ENCODE measurements at regions of chr6 and their contacts with region 1.

Region 1: DNA sequence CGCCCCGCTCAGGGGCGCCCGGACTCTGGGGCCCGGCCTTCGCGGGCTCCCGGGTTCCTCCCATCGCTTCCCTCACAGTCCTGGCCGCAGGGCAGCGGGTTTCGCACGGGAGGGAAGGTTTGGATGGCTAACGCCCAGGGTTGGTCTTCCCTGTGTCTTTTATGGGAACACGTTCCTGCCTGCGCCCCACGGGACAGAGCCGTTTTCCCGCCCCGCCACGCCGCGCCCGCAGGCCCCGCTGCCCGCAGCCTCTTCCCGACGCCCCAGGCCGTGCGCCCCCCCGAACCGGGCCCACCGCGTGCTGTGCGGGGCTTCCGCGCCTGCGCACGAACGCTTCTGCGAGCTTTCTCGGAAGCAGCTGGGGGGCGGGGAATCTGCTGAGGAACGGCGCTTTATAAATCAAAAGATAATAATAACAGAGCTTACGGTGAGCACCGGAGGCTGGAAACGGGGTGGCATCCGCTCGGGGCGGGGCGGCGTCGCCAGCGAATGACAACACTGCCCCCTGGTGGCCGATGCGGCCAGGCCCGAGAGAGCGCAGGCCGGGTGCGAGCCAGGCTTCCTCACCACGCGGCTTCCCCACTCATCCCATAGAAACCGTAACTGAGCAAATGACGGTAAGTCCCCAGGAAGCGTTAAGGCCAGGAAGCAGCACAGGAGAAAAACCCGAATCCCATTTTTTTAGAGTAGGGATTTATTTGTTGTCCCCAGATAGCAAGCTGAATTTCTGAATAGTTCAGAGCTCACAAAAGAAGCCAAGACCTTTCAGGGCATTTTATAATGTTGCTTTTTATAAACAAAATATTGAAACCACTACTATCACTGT is 116.4 kb downstream of the MYLK4 start:
- DNase-seq: peak; percentile 59
- H3K4me3 ChIP-seq: peak overlapping the region; percentile 37
- H3K27ac ChIP-seq: no peak overlapping the region
- H3K27me3 ChIP-seq: no peaks in the 10 kb centered on the region
- CTCF ChIP-seq: peak; percentile 98

Region 2: GRCh38 chr6:1596088-1596852 is 1038.1 kb before region 1 on chr6:
- CTCF ChIA-PET with region 1: interaction called, 72 read pairs
- POLR2A ChIA-PET with region 1: no interaction called
- DNase-seq: no peak
- H3K4me3 ChIP-seq: peak overlapping the region; percentile 58
- H3K27ac ChIP-seq: no peak overlapping the region
- H3K27me3 ChIP-seq: peaks cover 40% of the 10 kb centered on the region
- CTCF ChIP-seq: peak; percentile 93

Region 3: GRCh38 chr6:2363211-2363610 is 271.1 kb before region 1 on chr6:
- CTCF ChIA-PET with region 1: interaction called, 10 read pairs
- POLR2A ChIA-PET with region 1: no interaction called
- DNase-seq: no peak
- H3K4me3 ChIP-seq: no peak overlapping the region
- H3K27ac ChIP-seq: no peak overlapping the region
- H3K27me3 ChIP-seq: no peaks in the 10 kb centered on the region
- CTCF ChIP-seq: no peak

Region 4: DNA sequence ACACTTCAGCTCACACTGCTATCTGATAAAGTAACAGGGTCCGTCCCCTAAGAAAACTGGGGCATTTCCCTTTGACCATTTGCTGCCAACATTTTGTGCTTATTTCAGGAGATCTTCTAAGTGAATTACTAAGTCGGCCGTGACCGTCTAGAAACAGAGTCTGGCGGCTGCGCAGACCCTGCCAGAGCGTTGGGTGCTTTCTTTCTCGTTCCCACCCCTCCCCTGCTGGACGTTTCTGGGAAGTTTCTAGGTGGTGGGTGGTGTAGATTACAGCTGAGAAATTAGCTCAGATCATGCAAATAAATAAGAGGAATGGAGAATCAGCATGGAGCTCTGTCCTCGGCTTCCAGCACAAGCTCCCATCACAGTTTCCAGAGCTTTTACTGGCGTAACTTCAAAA is 11.7 kb before region 1 on chr6:
- CTCF ChIA-PET with region 1: interaction called, 14 read pairs
- POLR2A ChIA-PET with region 1: no interaction called
- DNase-seq: no peak
- H3K4me3 ChIP-seq: no peak overlapping the region
- H3K27ac ChIP-seq: no peak overlapping the region
- H3K27me3 ChIP-seq: peaks cover 16% of the 10 kb centered on the region
- CTCF ChIP-seq: 0 out of 2 replicates have a peak, but pooled peaks have one; percentile 17

Region 5: DNA sequence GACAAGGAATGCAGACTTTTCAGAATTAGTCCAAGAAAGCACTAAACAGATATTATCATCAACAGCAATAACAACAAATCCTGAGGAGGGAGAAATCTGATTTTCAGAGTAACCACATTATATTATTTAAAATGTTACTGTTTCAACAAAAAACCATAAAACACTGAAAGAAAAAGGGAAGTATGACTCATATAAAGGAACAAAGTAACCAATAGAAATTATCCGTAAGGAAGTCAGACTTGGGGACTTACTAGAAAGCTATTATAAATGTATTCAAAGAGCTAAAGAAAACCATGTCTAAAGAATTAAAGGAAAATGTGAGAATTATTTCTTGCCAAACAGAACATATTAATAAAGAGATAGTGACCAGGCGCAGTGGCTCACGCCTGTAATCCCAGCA is 18.3 kb after region 1 on chr6:
- CTCF ChIA-PET with region 1: interaction called, 53 read pairs
- POLR2A ChIA-PET with region 1: no interaction called
- DNase-seq: no peak
- H3K4me3 ChIP-seq: no peak overlapping the region
- H3K27ac ChIP-seq: no peak overlapping the region
- H3K27me3 ChIP-seq: no peaks in the 10 kb centered on the region
- CTCF ChIP-seq: no peak

Region 6: DNA sequence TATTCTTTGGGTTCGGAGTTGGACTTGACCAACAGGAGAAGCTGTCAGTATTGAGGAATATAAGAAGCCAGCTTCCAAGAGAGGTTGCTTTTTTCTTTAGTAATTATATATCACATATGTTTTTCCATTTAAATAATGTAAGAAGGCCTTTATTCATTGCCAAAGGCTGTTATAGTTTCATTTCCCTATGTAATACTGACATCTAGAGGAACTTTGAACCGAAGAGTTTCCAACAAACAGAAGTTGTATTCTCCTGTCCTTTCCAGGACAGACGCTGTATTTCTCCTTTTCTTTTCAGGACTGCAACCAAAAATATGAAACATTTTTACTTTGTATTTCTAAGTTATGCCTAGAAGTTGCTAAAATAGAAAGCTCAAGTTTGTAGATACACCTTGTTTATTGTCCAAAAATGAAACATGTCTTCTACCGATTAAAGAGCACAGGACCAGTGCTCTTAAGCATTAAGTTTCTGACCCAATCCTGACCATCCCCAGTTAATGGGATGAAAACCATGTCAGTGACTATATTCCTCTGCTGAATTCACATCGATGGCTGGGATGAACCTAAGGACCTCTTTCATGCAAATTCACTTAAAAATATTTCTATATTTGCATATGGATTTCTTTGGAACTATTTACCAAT is 61.2 kb after region 1 on chr6:
- CTCF ChIA-PET with region 1: interaction called, 17 read pairs
- POLR2A ChIA-PET with region 1: no interaction called
- DNase-seq: peak; percentile 7
- H3K4me3 ChIP-seq: no peak overlapping the region
- H3K27ac ChIP-seq: no peak overlapping the region
- H3K27me3 ChIP-seq: peaks cover 20% of the 10 kb centered on the region
- CTCF ChIP-seq: peak; percentile 48